AG04449 (cell line): ENCODE measurements at regions of chr22 and their contacts with region 1.

Region 1: DNA sequence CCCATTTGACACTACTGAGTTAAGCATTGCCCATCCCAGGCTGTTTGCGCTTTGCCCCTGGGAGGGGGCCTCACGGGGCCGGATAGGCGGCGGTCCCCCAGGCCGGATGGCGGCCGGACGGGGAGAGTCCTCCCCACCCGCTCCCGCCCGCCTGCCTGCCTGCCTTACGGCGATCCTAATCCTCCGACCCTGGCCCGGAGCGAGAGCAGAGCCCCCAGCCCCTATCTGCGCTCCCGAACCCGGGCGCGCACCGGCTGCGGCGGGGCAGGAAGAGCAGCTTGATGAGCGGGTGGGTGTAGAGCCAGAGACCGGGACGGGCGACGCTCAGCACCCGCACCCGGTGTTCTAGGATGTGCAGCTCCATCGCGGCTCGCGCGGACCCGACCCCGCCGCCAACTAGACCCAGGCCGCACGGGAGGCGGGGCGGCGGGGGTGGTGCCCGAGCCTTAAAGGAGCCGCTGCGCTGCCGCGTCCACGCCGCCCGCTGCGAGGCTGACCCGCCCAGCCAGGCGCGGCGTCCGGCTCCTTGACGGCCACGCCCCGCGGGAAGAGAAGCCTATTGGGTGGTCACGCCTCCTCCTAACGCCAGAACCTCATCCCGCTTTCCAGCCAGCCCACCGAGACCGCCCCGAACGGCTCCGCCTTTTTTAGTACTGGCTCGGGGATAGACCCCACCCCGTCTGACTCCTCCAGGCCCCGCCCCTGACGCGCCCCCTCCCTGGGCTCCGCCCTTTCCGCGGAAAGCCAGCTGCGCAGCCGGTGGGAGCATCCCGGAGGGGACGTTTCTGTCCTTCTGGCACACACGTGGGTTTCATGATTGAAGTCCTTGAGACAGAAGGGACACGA is at the start of gene CASTOR1:
- DNase-seq: peak; percentile 83
- H3K4me3 ChIP-seq: peak within 1 kb of the TSS; percentile 81
- CTCF ChIP-seq: no peak

Region 2: DNA sequence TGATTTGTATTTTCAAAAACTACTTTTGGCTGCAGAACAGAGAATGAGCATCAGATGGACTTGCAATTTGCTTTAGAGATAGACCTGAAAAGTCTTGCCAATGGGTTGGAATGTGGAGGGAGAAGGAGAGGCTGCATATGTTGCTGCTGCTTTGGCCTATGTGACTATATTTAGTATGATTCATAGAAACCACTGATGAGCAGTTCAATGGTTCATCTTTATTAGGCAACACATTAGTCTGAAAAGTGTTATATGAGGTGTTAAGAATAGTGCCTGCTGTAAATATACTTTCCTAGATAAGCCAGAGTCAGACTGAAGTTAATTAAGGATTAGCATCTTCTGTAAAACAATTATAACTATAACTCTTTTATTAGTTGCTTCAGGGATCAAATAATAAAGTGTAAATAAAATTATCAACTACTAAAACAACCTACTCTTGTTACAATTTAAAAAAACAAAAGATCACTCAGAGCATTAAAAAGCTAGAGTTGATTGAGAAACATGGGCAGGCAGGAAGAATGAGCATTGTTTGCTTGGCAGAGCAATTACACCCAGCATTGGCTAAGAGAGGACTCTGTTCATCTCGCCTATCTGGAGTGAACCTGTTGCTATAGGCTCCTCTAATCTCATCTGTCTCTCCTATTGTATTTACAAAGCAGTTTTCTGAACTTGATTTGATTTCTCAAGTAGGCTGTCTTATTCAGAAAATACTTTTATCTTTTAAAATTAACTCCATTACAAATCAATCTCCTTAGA is 172.8 kb before region 1 on chr22:
- CTCF ChIA-PET with region 1: interaction called, 23 read pairs
- POLR2A ChIA-PET with region 1: no interaction called
- DNase-seq: peak; percentile 31
- H3K4me3 ChIP-seq: no peak overlapping the region
- CTCF ChIP-seq: no peak

Region 3: DNA sequence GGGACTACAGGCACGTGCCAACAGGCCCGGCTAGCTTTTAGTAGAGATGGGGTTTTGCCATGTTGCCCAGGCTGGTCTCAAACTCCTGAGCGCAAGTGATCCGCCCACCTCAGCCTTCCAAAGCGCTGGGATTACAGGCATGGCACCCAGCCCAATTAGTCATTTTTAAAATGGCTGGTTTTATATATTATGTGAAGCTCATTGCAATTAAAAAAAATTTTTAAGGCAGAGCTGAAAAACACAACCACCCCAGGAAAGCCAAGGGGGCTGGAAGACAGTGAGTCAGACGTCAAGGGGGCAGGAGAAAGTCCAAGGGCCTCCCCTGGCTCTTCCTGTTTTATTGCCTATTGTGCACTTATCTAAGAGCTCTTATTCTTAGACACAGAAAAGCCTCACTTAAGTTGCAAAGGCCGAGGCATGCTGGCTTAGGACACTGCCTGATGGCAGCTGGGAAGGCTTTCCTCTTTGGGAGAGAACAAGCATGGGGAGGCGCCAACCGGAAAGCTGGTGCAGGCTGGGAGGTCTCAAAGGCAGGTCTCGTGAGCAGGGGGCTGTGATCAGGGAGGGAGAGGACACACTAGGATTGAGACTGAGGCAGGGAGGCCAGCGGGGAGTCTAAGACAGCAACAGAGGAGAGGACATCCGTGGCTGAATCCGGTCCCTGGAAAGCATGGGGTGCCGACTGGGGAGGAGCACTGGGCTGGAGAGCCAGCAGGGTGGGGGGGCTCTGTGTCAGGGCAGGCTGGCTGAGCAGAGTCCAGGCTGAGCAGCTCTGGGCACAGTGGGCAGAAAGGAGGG is 11.6 kb before region 1 on chr22:
- CTCF ChIA-PET with region 1: interaction called, 77 read pairs
- POLR2A ChIA-PET with region 1: interaction called, 4 read pairs
- DNase-seq: no peak
- H3K4me3 ChIP-seq: 0 out of 2 replicates have a peak overlapping the region, but pooled peaks have one; percentile 3
- CTCF ChIP-seq: no peak

Region 4: DNA sequence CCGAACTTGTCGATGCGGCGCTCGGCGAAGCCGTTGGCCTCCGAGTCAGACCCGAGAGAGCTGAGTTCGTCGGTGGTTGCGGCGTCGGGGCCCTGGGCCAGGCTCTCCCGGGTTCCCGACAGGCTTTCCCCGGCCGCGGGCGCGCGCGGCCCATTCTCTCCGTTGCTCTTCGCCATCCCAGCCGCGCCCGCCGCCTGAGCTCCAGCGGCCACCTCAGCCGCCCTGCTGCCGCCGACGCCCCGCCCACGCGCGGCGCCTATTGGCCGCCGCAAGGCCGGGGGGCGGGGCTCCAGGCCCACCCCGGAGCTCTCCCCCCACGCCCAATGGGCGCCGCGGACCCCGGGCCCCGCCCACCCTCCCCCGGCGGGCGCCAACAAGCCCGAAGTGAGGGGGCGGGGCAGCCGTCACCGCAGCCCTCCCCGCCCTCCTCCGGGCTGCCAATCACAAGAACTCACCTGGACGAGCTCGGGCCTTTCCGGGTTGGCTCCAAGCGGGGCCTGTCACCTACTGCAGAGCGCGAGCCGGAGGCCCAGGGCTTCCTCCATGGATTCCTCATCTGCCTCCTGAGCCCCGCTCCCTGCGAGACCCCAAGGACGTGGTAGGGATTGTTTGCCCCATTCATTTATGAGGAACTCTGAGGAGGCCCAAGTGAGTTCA is 37.5 kb after region 1 on chr22 and contains the start of gene TBC1D10A:
- CTCF ChIA-PET with region 1: interaction called, 50 read pairs
- POLR2A ChIA-PET with region 1: interaction called, 11 read pairs
- DNase-seq: no peak
- H3K4me3 ChIP-seq: peak within 1 kb of the TSS; percentile 87
- CTCF ChIP-seq: no peak

Region 5: GRCh38 chr22:30368431-30368830 is 79.1 kb after region 1 on chr22:
- CTCF ChIA-PET with region 1: interaction called, 22 read pairs
- POLR2A ChIA-PET with region 1: no interaction called
- DNase-seq: no peak
- H3K4me3 ChIP-seq: no peak overlapping the region
- CTCF ChIP-seq: no peak

Region 6: DNA sequence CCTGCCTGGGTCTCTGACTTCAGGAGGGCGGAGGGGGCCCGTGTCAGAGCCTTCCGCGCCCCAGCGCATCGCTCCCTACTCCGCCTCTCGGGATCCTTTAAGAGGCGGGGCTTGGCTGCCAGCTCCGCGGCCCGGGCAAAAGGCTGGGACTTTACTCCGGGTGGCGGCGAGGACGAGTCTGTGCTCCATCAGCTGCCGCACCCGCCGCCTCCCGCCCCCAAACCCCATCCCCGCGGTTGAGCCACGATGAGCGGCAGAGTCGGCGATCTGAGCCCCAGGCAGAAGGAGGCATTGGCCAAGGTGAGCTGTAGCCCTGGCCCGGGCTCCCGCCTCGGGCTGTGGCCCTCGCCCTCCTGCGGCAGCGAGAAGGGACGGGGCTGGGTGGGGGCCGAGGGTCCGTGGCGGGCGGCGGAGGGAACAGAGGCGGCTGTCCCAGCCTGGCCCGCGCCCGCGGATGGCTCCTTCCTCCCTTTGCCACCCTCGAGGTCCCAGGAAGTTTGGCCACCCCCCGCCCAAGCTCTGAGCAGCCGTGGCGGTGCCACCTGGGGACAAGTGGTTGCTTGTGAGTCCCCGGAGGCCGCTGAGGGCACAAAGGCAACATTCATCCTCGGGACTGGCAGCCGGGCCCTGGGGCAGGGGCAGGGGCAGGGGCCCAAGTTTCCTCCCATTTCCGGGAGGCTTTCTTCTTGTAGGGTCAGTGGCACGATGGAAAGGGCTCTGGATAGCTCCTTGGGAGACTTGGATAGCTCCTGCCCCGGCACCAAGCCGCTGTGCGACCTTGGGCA is 107.7 kb after region 1 on chr22 and contains the start of gene SEC14L2:
- CTCF ChIA-PET with region 1: interaction called, 235 read pairs
- POLR2A ChIA-PET with region 1: no interaction called
- DNase-seq: no peak
- H3K4me3 ChIP-seq: peak within 1 kb of the TSS; percentile 85
- CTCF ChIP-seq: no peak